ENCODE measurements at regions of chr10 and their contacts with region 1.

Region 1: DNA sequence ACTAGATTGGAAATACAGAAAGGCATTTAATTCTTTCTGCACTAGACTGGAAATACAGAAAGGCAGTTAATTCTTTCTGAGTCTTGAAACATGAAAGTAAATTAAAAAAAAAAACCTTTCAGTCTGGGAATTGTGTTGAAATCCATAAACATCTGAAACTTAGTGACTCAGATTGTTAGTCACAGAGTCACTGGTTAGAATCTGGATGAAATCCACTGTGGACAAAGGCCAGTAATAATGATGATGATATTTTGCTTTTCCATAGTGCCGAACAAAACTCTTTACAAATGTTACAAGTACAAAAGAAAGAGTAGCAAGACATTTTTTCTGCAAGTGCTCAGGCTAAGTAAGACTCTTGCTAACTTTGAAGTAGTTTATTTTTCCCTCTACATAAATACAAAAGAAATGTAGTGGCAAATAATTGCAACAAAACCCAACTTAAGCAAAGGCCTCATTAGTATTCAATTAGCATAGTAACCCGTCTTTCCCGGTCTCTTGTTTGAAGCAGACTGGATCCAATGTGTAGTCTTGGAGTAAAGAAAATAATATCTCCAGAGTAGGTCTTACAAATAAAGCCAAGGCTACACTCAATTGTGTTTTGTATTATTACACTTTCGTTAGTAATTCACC is 5.8 kb upstream of the PRTFDC1 start:
- DNase-seq: no peak
- H3K4me3 ChIP-seq: peak overlapping the region in 57 of 59 donors; percentile 2 to 60 (median 34)
- H3K27ac ChIP-seq: peak overlapping the region; percentile 53 to 100 (median 93)
- H3K27me3 ChIP-seq: no peaks in the 10 kb centered on the region
- CTCF ChIP-seq: peak in 1 of 56 donors; percentile 4

Region 2: DNA sequence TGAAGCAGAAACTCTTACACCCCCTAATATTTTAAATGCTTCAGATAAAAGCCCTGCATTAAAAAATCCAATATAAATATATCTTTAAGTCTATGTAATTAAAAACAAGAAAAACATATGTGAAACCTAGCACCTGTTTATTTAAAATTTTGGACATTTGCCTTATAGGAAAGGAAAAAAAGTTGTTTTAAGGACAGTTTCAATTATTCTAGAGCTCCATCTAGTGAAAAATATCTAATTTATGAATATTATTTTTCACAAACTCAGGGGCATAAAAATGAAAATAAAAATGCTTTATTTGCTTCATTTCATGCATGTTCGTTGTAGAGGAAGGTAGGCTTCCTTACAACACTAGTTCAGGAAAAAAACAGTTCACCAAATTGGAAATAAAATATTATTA is 31.7 kb after region 1 on chr10:
- intact Hi-C with region 1: loop called in 1 of 2 experiments (anchors 5 kb)
- DNase-seq: no peak
- H3K4me3 ChIP-seq: no peak overlapping the region
- H3K27ac ChIP-seq: peak overlapping the region in 23 of 59 donors; percentile 1 to 79 (median 65)
- H3K27me3 ChIP-seq: no peaks in the 10 kb centered on the region
- CTCF ChIP-seq: peak in 54 of 56 donors; percentile 20 to 78 (median 54)

Region 3: GRCh38 chr10:25016376-25017154 is 58.4 kb after region 1 on chr10 and contains the start of gene THNSL1:
- intact Hi-C with region 1: loop called (anchors 2 kb)
- DNase-seq: peak; percentile 95 to 99 (median 98)
- H3K4me3 ChIP-seq: peak within 1 kb of the TSS; percentile 60 to 92 (median 81)
- H3K27ac ChIP-seq: peak within 1 kb of the TSS; percentile 63 to 98 (median 94)
- H3K27me3 ChIP-seq: no peaks in the 10 kb centered on the region
- CTCF ChIP-seq: peak in 19 of 56 donors; percentile 7 to 33 (median 23)
- total RNA-seq, gene THNSL1: 5.6 to 16.0 (median 10.5) TPM

Region 4: DNA sequence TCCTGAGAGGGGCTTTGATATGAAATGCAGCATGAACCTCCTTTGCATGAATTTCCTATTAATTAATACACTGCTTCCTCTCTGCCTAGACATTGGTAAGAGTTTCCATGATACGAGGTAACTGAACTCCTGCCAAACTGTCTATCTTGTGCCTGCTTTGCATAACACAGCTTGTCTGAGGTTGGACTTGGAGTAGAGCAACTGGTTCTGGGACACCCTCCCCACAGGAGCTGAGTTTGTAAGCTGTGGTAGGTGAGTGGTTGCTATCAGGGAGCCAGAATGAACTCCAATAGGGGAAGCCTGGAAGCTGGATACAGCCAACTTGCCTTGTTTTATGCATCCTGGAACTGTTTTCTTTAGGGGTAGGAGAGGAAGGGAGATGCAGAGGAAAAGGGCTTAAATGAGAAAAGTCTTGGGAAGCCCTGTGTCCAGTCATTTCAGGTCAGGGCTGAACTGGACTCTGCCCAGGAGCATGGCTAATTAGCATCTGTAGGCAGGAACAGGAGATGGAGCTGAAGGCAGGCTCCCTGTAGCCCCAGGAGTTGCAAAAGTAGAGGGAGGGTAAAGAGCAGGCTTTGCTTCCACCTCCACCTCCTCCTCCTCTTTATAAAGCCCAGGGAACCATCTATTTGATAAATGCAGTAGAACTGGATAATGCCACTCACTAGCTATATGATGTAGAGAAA is 143.4 kb after region 1 on chr10:
- intact Hi-C with region 1: no loop called
- DNase-seq: no peak
- H3K4me3 ChIP-seq: no peak overlapping the region
- H3K27ac ChIP-seq: no peak overlapping the region
- H3K27me3 ChIP-seq: no peaks in the 10 kb centered on the region
- CTCF ChIP-seq: no peak

Region 5: GRCh38 chr10:25306386-25306785 is 348.2 kb after region 1 on chr10:
- intact Hi-C with region 1: no loop called
- DNase-seq: no peak
- H3K4me3 ChIP-seq: no peak overlapping the region
- H3K27ac ChIP-seq: no peak overlapping the region
- H3K27me3 ChIP-seq: no peaks in the 10 kb centered on the region
- CTCF ChIP-seq: no peak